CD8-positive, alpha-beta T cell (primary cell): ENCODE measurements at regions of chr20 and their contacts with region 1.

Region 1: DNA sequence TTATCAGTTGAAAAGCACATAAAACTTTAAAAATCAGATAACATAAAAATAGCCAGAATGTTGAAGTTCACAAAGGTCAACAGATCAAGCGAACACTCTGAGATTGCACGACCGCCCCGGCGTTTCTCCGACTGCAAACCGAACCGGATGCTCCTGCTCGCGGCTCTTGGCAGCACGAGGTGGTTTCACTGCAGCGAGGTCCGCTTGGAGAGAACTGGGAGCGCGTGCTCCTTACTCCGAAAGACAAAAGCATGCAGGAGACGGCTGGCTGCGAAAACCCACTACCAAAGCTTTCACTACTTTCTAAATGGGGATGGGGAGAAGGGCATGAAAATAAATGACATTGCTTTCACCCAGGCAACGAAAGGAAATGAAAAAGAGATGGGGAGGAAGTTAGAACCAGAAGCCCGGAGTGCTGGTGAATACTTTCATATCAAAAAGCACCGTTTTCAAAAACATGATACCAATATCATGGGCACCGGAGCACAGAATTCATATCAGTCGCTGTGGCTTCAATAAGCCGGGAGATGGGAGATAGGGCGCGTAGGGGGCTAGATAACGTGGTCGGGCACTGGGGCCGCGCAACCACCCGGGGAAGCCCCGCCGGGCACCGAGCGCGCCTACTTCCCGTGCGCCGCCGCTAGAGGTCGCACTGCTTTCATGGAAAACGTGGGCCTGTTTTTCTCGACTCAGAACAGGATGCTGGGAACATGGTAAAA is 8.3 kb upstream of the ANKRD60 start:
- DNase-seq: peak; percentile 70 to 91 (median 82)
- ATAC-seq: peak; percentile 87
- H3K4me3 ChIP-seq: peak overlapping the region; percentile 53 to 85
- H3K4me3 Mint-ChIP-seq: peak overlapping the region; percentile 86
- H3K27ac ChIP-seq: peak overlapping the region; percentile 56 to 73
- H3K27ac Mint-ChIP-seq: peak overlapping the region; percentile 89
- H3K4me1 ChIP-seq: peaks cover 7% of the 10 kb centered on the region
- H3K4me1 Mint-ChIP-seq: peaks cover 19% of the 10 kb centered on the region
- H3K27me3 ChIP-seq: no peaks in the 10 kb centered on the region
- H3K27me3 Mint-ChIP-seq: no peaks in the 10 kb centered on the region
- CTCF ChIP-seq: peak; percentile 96

Region 2: GRCh38 chr20:57748601-57749130 is 488.1 kb before region 1 on chr20:
- CTCF ChIA-PET with region 1: no interaction called
- POLR2A ChIA-PET with region 1: no interaction called
- intact Hi-C with region 1: no loop called
- DNase-seq: peak; percentile 4 to 74 (median 51)
- ATAC-seq: peak; percentile 87
- H3K4me3 ChIP-seq: peak overlapping the region in 1 of 2 experiments; percentile 39
- H3K4me3 Mint-ChIP-seq: peak overlapping the region; percentile 82
- H3K27ac ChIP-seq: no peak overlapping the region
- H3K27ac Mint-ChIP-seq: peak overlapping the region; percentile 32
- H3K4me1 ChIP-seq: no peaks in the 10 kb centered on the region
- H3K4me1 Mint-ChIP-seq: peaks cover 9% of the 10 kb centered on the region
- H3K27me3 ChIP-seq: no peaks in the 10 kb centered on the region
- H3K27me3 Mint-ChIP-seq: peaks cover 18% of the 10 kb centered on the region
- CTCF ChIP-seq: no peak

Region 3: GRCh38 chr20:58294477-58295449 is 58.0 kb after region 1 on chr20:
- CTCF ChIA-PET with region 1: no interaction called
- POLR2A ChIA-PET with region 1: no interaction called
- intact Hi-C with region 1: no loop called
- DNase-seq: no peak
- ATAC-seq: no peak
- H3K4me3 ChIP-seq: no peak overlapping the region
- H3K4me3 Mint-ChIP-seq: no peak overlapping the region
- H3K27ac ChIP-seq: no peak overlapping the region
- H3K27ac Mint-ChIP-seq: peak overlapping the region; percentile 55
- H3K4me1 ChIP-seq: no peaks in the 10 kb centered on the region
- H3K4me1 Mint-ChIP-seq: peaks cover 27% of the 10 kb centered on the region
- H3K27me3 ChIP-seq: no peaks in the 10 kb centered on the region
- H3K27me3 Mint-ChIP-seq: no peaks in the 10 kb centered on the region
- CTCF ChIP-seq: no peak

Region 4: DNA sequence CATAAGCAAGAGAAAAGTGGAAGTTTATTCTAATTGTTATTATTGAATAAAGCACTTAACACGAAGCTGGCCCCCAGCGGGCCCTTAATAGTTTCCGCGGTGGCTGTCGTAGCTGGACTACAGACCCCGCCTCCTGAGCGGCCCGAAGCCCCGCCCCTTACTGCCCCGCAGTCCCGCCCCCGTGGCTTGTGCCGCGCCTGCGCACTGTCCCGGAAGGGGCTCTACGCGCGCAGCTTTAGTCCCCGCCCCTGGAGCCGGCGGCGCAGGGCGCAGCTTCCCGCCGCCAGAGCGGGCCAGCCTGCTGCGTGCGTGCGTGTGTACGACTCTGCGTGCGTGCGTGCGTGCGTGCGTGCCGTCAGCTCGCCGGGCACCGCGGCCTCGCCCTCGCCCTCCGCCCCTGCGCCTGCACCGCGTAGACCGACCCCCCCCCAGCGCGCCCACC is 152.1 kb after region 1 on chr20 and contains the start of gene VAPB:
- CTCF ChIA-PET with region 1: interaction called, 7 read pairs
- POLR2A ChIA-PET with region 1: interaction called, 3 read pairs
- intact Hi-C with region 1: loop called (anchors 2 kb)
- DNase-seq: peak; percentile 94 to 99 (median 97)
- ATAC-seq: peak; percentile 95
- H3K4me3 ChIP-seq: peak within 1 kb of the TSS; percentile 87 to 90
- H3K4me3 Mint-ChIP-seq: peak within 1 kb of the TSS; percentile 88
- H3K27ac ChIP-seq: peak within 1 kb of the TSS; percentile 98 to 99
- H3K27ac Mint-ChIP-seq: peak within 1 kb of the TSS; percentile 96
- H3K4me1 ChIP-seq: peaks cover 43% of the 10 kb centered on the region
- H3K4me1 Mint-ChIP-seq: peaks cover 40% of the 10 kb centered on the region
- H3K27me3 ChIP-seq: peaks cover 0 to 2% of the 10 kb centered on the region in 2 experiments
- H3K27me3 Mint-ChIP-seq: peaks cover 4% of the 10 kb centered on the region
- CTCF ChIP-seq: no peak
- total RNA-seq, gene VAPB: 29.3 to 32.3 TPM

Region 5: DNA sequence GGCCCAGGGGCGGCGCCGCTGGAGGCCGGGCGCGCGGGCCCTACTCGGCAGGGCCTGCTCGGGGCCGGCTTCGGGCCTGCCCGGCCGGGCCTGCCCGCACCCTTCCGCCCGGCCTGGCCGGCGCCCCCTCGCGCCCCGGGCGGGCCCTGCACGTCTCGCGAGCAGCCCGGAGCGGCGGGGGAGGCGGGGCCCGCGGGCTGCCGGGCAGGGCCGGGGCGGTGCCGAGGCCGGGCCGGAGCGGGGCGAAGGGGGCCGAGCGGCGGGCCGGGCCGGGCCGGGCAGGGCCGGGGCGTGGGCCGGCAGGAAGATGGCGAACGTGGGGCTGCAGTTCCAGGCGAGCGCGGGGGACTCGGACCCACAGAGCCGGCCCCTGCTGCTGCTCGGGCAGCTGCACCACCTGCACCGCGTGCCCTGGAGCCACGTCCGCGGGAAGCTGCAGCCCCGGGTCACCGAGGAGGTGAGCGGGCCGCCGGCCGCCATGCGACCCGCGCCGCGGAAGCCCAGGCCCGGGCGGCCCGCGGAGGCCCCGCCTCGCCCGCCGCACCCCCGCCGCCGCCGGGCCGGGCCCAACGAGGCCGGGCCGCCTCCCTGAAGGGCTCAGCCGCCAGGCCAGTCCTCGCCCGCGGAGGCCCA is 455.9 kb after region 1 on chr20 and contains the start of gene NPEPL1:
- CTCF ChIA-PET with region 1: interaction called, 3 read pairs
- POLR2A ChIA-PET with region 1: no interaction called
- intact Hi-C with region 1: loop called (anchors 1 to 2 kb)
- DNase-seq: peak in 8 of 9 experiments; percentile 49 to 85 (median 63)
- ATAC-seq: peak; percentile 93
- H3K4me3 ChIP-seq: peak within 1 kb of the TSS; percentile 11 to 40
- H3K4me3 Mint-ChIP-seq: peak within 1 kb of the TSS; percentile 65
- H3K27ac ChIP-seq: peak within 1 kb of the TSS; percentile 23 to 73
- H3K27ac Mint-ChIP-seq: peak within 1 kb of the TSS; percentile 89
- H3K4me1 ChIP-seq: peaks cover 20% of the 10 kb centered on the region
- H3K4me1 Mint-ChIP-seq: peaks cover 12% of the 10 kb centered on the region
- H3K27me3 ChIP-seq: no peaks in the 10 kb centered on the region
- H3K27me3 Mint-ChIP-seq: no peaks in the 10 kb centered on the region
- CTCF ChIP-seq: no peak
- total RNA-seq, gene NPEPL1: 46.9 to 58.3 TPM

Region 6: DNA sequence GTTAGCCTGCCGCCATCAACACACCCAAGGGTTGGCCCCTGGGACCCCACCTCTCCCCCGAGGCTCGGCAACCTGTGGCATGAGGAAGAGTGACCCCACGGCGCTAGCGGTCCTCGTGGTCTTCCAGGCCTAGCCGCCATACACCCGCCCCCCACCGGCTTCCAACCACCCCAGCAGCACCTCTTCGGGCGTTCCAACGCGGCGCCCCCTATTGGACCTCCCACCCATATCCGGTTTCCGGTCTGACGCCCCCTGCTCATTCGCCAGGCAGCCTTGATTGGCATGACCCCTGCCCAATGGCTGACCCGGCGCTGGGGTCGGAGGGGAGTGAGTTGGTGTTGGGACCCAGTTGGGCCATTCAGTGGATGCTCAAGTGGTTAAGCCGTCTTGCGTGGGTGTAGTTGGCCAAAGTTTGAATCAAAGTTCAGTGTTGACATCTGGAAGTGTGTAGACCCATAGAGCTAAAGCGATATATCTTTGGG is 614.0 kb after region 1 on chr20 and contains the start of gene GNAS-AS1:
- CTCF ChIA-PET with region 1: no interaction called
- POLR2A ChIA-PET with region 1: no interaction called
- intact Hi-C with region 1: loop called (anchors 5 kb)
- DNase-seq: peak; percentile 61 to 87 (median 79)
- ATAC-seq: peak; percentile 91
- H3K4me3 ChIP-seq: peak within 1 kb of the TSS; percentile 48 to 55
- H3K4me3 Mint-ChIP-seq: peak within 1 kb of the TSS; percentile 91
- H3K27ac ChIP-seq: no peak within 1 kb of the TSS
- H3K27ac Mint-ChIP-seq: peak within 1 kb of the TSS; percentile 52
- H3K4me1 ChIP-seq: peaks cover 37% of the 10 kb centered on the region
- H3K4me1 Mint-ChIP-seq: peaks cover 32% of the 10 kb centered on the region
- H3K27me3 ChIP-seq: peaks cover 11 to 29% of the 10 kb centered on the region in 2 experiments
- H3K27me3 Mint-ChIP-seq: peaks cover 14% of the 10 kb centered on the region
- CTCF ChIP-seq: no peak
- total RNA-seq, gene GNAS-AS1: 0.28 TPM in 1 of 2 experiments, not detected in the other

Region 7: DNA sequence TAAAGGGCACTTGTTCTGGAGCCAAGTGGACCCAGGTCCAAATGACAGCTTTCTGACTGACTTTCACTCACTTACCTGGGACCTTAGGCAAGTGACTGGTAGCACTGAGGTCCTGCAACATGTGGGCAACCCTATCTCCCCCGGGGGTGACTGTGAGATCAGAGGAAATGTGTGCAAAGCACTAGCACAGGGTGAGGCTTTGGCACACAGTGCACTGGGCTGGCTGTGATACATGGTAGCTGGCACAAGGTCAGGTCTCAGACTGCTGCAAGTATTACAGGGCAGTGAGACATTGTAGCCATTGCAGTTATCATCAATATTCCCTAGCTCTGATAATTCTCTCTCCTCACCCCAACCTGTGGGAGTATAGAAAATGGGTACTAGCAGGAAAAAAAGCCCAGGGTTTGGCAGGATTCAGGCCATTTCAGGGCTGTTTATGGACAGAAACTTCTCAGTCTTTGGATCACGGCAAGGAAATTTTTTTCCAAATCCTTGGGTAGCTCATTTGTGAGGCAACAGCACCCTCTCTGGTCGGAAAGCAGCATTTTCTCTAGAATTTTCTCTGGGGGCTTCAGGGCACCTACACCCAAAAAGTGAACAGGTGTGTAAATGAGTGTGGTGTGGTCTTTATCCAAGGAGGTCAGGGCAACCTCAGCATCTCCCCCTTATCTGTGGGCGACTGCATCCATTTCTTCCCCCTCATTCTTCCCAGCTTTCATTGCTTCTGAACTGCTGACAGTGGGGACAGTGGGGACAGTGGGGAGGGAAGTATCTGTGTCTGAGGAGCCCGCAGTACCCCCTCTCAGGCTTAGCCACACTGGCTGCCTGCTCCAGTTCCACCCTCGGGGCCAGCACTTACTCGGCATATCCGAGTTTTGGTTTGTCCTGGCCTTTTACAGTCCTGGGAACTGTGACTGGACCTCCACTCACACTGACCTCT is 1218.9 kb after region 1 on chr20:
- CTCF ChIA-PET with region 1: interaction called, 3 read pairs
- POLR2A ChIA-PET with region 1: no interaction called
- intact Hi-C with region 1: loop called in 1 of 2 experiments (anchors 2 kb)
- DNase-seq: peak in 2 of 9 experiments; percentile 20 to 28
- ATAC-seq: no peak
- H3K4me3 ChIP-seq: no peak overlapping the region
- H3K4me3 Mint-ChIP-seq: no peak overlapping the region
- H3K27ac ChIP-seq: no peak overlapping the region
- H3K27ac Mint-ChIP-seq: no peak overlapping the region
- H3K4me1 ChIP-seq: no peaks in the 10 kb centered on the region
- H3K4me1 Mint-ChIP-seq: peaks cover 3% of the 10 kb centered on the region
- H3K27me3 ChIP-seq: no peaks in the 10 kb centered on the region
- H3K27me3 Mint-ChIP-seq: peaks cover 16% of the 10 kb centered on the region
- CTCF ChIP-seq: peak; percentile 46